ENCODE measurements at regions of chr15 and their contacts with region 1.

Region 1: DNA sequence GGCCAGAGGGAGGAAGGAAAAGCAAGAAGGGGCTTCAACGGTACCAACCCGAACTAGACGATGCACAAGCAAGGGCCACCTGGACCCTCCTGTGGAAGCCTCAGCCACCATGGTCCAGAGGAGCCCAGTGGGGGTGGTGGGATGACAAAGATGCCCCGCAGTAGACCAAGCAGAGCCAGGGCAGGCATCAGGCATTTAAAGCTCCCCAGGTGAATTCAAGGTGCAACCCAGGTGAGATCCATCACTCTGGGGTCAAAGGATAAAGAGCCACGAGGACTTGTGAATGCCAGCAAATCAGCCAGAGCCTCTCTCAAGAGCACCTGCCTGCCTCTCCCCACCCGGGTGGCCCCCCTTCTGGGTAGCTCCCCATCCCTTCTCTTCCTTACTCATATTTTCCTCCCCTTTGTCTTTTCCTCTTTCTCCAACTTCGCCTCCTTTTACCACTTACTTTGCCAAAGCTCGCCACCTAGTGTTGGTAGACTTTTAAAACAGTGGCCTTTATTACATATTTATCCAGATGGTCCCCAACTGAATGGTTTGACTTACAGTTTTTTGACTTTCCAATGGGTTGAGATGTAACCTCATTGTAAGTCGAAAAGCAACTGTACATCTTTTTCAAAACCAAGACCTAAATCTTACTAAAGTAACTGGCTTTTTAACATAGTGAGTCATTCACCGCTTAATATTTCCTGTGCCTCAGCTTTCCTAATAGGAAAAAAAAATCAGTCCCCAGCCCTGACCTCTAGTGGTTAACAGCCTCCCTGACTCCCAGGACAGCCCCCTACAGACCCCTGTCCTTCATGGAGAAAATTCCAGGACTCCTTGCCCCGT is 18.8 kb downstream of the PLA2G4F start:
- DNase-seq: no peak
- H3K4me3 ChIP-seq: no peak overlapping the region
- CTCF ChIP-seq: peak; percentile 59

Region 2: DNA sequence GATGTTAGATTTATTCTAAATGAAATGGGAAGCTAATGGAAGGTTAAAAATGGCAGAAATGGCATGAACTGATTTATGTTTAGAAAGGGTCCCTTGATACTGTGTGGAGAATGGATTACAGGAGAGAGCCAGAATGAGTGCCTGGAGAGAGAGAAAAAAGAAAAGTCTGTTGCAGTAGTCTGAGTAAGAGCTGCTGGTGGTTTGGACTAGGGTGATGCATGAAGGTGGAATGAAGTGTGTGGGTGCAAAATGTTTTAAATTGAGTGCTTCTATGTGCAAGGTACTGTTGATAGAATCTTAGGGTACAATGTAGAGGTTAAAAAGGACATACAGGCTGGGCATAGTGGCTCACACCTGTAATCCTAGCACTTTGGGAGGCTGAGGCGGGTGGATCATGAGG is 488.9 kb before region 1 on chr15:
- CTCF ChIA-PET with region 1: no interaction called
- POLR2A ChIA-PET with region 1: no interaction called
- DNase-seq: no peak
- H3K4me3 ChIP-seq: no peak overlapping the region
- CTCF ChIP-seq: no peak

Region 3: GRCh38 chr15:42050484-42051255 is 87.0 kb before region 1 on chr15:
- CTCF ChIA-PET with region 1: interaction called, 12 read pairs
- POLR2A ChIA-PET with region 1: no interaction called
- DNase-seq: no peak
- H3K4me3 ChIP-seq: no peak overlapping the region
- CTCF ChIP-seq: no peak

Region 4: GRCh38 chr15:42056934-42057779 is 80.5 kb before region 1 on chr15:
- CTCF ChIA-PET with region 1: interaction called, 142 read pairs
- POLR2A ChIA-PET with region 1: no interaction called
- DNase-seq: no peak
- H3K4me3 ChIP-seq: peak overlapping the region; percentile 38
- CTCF ChIP-seq: peak; percentile 59

Region 5: GRCh38 chr15:42107473-42107872 is 30.2 kb before region 1 on chr15:
- CTCF ChIA-PET with region 1: interaction called, 62 read pairs
- POLR2A ChIA-PET with region 1: no interaction called
- DNase-seq: no peak
- H3K4me3 ChIP-seq: no peak overlapping the region
- CTCF ChIP-seq: no peak

Region 6: GRCh38 chr15:42121682-42122081 is 16.0 kb before region 1 on chr15:
- CTCF ChIA-PET with region 1: interaction called, 12 read pairs
- POLR2A ChIA-PET with region 1: no interaction called
- DNase-seq: no peak
- H3K4me3 ChIP-seq: no peak overlapping the region
- CTCF ChIP-seq: no peak

Region 7: DNA sequence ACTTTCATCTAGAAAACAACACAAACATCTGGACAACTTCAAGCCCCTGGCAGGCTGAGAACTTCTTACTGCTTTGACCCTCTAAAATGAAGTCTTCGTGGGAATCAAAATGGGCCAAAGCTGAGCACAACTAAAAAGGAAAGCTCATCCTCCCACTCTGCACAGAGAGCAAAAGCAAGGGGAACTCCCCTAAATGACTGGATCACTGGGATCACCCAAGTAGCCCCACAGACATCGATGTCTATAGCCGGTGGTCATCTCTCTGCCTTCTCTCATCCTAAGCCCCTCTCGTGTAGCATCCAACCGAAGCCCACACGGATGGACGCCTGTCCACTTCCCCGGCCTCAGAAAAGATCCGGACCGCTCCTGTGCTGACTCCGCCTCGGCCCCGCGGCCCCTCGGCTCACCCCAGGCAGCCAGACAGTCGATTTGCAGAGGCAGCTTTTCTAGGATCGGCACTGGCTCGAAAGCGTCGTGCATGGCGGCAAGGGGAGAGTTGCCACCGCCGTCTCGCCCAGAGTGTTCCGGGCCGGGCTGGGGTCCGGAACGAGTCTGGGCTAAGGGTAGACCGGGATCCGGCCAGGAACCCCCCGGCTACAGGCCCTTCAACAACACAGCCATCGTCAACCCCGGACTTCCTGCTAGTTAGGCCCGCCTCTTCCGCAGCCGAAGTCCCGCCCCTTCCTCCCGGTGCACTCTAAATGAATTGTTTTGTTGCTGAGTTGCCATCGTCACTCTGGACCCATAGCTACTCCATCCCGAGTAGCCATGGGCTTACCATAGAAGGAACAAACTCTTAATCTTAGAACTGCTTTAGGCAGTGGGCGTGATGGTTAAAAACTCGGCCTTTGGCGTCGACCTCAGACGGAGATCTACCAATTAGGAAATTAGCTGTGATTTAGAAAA is 70.3 kb after region 1 on chr15 and contains the start of gene VPS39:
- CTCF ChIA-PET with region 1: no interaction called
- POLR2A ChIA-PET with region 1: no interaction called
- DNase-seq: peak; percentile 34
- H3K4me3 ChIP-seq: peak within 1 kb of the TSS; percentile 79
- CTCF ChIP-seq: no peak

Region 8: DNA sequence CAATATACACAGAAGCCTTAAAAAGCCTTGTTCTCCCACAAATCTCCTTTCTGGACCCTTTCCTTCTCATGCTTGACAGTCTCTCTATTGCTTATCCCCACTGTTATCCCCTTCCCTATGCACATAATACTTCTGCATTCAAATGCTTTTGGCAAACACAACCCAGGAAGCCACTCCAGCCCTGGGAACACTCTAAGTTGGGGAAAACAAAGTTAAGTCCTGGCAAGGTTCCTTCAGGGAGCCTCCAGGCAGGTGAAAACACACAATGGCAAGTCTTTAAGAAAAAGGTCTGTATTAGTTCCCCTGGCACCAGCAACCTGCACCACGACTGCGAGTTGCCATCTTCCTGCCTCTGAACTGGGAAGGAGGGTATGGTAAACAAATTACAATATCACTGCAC is 115.7 kb after region 1 on chr15:
- CTCF ChIA-PET with region 1: no interaction called
- POLR2A ChIA-PET with region 1: no interaction called
- DNase-seq: no peak
- H3K4me3 ChIP-seq: no peak overlapping the region
- CTCF ChIP-seq: no peak

Measured in AG04449 (cell line).